GM18951 (cell line): ENCODE measurements at regions of chr4 and their contacts with region 1.

Region 1: GRCh38 chr4:128863312-128864075 is 54.0 kb downstream of the JADE1 start:
- POLR2A ChIP-seq: no peak

Region 2: DNA sequence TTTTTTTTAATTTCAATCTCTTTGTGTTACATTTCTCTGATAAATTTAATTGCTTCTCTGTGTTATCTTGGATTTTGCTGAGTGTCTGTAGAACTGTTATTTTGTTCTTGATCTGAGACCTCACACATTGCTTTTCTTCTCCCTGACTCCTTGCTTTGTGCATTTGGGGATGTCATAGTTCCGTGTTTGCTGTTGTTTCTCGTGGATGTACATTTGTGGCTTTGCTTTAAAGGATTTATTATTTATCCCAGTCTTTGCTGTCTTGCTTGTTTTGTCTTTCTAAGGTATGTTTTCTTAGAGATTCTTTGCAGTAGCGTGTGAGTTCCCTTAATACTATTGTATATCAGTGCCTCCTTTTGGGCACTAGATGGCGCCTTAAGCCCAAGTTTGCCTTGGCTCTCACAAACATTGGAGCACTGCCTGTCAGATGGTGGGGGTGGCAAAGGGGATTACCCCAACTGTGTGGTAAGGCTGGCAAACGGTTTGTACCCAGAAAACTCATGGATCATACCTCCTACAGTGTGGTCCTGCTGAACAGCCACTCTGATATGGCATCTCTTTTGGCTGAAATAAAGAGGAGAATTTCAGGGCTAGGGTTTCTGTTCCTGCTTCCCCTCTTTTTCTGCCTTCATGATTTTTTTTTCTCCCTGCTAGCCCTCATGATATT is 672.2 kb before region 1 on chr4:
- in situ Hi-C with region 1: loop called (anchors 25 kb)
- POLR2A ChIP-seq: no peak

Region 3: GRCh38 chr4:128565565-128566186 is 297.8 kb before region 1 on chr4:
- in situ Hi-C with region 1: loop called (anchors 10 kb)
- POLR2A ChIP-seq: no peak

Region 4: DNA sequence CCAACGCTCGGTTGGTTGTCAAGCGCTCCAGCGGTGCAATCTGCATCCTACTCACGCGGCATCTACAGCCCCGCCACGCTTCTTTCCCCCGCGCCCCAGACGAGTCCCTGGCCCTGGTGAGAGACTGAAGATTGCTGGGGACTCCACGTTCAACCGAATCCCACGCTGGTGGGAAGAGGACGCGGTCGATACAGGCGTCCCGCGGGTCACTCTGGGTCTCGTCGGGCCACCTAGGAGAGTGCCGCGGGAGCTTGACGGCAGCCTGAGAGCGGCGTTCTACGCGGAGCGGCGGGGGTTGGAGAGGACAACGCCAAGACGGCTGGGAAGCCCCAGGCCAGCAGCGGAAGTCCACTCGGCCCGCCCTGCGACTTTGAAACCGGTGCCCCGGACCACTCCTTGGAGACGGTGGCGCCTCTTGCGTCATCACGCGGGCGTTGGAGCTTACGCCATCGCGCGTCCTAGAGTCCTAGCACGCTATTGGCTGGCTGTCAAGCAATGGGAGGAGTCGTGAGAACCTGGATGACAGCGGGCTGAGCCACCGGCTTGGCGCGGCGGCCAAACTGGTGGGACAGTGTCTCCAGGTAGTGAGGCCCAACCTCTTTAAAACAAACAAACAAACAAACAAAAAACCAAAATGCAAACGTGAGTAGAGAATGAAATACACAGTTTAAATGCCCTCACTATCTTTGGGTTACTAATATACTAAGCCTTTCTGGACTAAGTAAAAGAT is 229.9 kb after region 1 on chr4 and contains the start of gene SCLT1:
- in situ Hi-C with region 1: no loop called
- POLR2A ChIP-seq: peak; percentile 96

Region 5: DNA sequence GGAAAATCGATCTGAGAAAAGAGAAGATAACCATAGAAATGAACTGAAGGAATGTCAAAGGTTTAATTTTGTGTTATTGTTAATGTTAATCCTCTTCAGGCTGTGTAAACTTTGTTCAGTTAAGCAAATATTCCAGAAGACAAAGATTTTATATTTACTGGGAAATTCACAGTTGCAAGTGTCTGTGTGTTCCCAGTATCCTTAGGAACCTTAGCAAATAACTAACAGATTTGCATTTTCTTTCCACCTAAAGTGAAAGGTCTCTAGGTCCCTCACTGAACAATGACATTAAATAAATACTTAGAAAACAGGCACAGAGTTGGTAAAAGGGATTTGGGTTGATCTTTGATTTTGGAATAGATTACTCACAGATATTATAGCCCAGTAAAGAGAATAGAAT is 557.1 kb after region 1 on chr4:
- in situ Hi-C with region 1: no loop called
- POLR2A ChIP-seq: no peak